ENCODE measurements at regions of chr6 and their contacts with region 1.

Region 1: DNA sequence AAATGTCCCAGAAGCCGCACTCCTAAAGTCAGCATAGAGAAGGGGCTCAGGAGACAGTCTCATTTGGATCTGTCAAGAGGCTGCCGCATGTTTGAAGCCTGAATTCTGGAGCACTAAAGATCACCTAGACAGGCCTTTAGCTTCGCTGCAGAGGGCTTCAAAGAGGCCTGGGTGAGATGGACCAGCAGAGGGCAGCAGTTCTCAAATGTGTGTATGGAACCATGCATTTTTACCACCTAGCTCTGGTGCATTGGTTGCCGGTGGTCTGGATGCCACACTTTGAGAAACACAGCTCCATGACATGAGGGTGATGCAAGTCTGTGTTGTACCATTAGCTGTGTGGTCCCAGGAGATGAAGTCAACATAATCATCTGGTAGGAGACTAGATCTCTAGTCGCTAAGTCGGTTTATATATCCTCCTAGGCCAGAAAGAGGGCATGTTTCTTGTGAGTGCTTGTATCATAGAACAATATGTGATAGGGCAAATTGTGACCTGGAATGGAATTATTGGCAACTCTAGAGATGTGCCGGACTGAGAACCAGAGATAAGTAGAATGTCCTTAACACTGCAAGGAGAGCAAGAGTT is 64.8 kb downstream of the KIAA0319 start:
- DNase-seq: peak; percentile 57 to 87 (median 76)
- H3K4me3 ChIP-seq: no peak overlapping the region
- H3K27ac ChIP-seq: no peak overlapping the region
- H3K27me3 ChIP-seq: no peaks in the 10 kb centered on the region
- CTCF ChIP-seq: peak; percentile 61 to 92 (median 83)

Region 2: DNA sequence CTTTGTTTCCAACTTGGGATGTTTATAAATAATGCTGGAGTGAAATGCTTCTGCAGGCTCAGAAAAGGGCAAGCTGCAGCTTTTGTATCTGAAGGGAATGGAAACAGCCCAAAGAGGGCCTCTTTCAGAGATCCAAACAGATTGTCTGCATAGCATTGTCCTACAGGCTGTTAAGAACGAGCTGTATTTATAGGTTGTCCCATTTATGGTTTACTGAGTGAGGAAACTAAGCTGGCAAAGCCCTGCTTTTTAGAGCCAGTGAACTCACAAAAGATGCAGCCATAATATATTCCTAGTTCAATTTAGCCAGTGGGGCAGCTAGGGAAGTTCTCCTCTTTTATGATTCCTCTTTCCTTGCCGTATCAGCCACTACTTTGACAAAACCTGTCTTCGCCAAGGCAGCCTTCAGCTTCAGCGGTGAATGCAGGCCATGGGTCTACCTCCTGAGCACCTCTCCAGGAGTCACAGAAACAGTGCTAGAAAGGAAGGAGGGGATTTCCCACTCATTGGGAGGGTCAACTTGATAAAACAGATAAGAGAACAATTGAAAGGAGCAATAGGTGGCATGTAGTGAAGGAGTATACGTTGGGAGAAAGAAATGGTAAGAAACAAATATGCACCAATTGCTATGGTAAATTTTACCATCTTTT is 49.8 kb after region 1 on chr6:
- intact Hi-C with region 1: no loop called
- DNase-seq: peak in 1 of 10 donors; percentile 14
- H3K4me3 ChIP-seq: no peak overlapping the region
- H3K27ac ChIP-seq: peak overlapping the region in 42 of 59 donors; percentile 3 to 80 (median 52)
- H3K27me3 ChIP-seq: no peaks in the 10 kb centered on the region
- CTCF ChIP-seq: no peak

Region 3: DNA sequence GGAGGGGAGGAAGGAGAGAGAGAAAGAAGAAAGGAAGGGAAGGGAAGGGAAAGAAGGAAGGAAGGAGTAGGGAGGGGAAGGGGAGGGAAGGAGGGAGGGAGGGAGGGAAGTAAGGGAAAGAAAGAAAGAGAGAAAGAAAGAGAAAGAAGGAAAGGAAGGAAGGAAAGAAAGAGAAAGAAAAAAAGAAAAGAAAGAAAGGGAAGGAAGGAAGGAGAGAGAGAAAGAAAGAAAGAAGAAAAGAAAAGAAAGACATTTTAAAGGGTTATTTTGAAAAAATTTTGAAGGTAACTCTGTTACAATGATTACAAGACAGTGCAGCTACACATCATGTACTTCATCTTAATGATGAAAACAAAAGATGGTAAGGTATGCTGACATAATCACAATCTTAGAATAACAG is 60.9 kb after region 1 on chr6:
- intact Hi-C with region 1: no loop called
- DNase-seq: no peak
- H3K4me3 ChIP-seq: no peak overlapping the region
- H3K27ac ChIP-seq: no peak overlapping the region
- H3K27me3 ChIP-seq: no peaks in the 10 kb centered on the region
- CTCF ChIP-seq: no peak

Region 4: DNA sequence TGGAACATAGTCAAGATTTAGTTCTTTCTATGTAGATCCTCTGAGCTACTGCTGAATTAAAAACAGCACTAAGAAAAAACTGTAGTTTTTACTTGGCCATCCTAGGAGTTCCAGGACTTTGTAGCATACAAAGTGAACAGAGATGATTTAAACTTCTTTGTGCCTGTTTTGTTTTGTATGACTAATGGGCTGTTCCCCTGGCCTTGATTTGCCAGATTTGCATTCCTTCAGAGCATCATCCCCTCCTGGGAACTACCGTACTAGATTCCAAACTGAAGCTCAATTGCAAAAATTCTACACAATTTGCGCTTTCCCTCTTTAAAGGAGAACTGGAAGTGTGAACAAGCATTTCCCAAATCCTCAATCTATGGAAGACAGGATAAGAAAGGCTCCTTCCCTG is 108.8 kb after region 1 on chr6:
- intact Hi-C with region 1: loop called (anchors 2 to 5 kb)
- DNase-seq: no peak
- H3K4me3 ChIP-seq: no peak overlapping the region
- H3K27ac ChIP-seq: no peak overlapping the region
- H3K27me3 ChIP-seq: no peaks in the 10 kb centered on the region
- CTCF ChIP-seq: no peak

Region 5: DNA sequence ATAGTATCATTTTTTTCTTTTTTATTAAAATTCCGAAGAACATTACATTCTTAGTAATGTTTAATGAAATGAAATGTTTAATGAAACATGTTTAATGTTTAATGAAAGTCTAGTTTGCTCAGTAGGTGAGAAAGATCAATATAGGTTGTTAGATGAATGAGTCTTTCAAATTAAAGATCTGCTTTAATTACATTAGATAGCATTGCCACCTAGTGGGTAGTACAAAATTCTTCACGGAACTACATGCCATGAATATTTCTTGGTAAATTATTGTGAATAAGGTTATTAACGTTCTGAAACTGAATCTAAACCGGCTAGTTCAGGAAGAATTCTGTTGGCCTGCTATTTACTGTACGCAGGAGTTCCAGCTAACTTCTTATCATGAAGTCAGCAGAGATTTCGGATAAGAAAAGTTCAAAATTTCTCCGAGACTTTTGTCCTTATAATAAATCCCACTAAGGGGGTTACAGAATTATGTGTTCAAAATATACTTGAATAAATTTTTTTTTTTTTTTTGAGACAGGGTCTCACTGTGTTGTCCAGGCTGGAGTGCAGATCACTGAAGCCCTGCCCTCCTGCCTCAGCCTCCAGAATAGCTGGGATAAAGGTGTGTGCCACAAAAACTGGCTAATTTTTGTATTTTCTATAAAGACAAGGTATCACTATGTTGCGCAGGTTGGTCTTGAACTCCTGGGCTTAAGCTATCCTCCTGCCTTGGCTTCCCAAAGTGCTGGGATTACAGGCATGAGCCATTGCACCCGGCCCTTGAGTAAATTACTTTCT is 185.7 kb after region 1 on chr6:
- intact Hi-C with region 1: loop called (anchors 2 to 5 kb)
- DNase-seq: no peak
- H3K4me3 ChIP-seq: no peak overlapping the region
- H3K27ac ChIP-seq: no peak overlapping the region
- H3K27me3 ChIP-seq: no peaks in the 10 kb centered on the region
- CTCF ChIP-seq: peak; percentile 30 to 78 (median 55)

Measured in dorsolateral prefrontal cortex (tissue), 120 donors.